ENCODE measurements at regions of chr7 and their contacts with region 1.

Region 1: DNA sequence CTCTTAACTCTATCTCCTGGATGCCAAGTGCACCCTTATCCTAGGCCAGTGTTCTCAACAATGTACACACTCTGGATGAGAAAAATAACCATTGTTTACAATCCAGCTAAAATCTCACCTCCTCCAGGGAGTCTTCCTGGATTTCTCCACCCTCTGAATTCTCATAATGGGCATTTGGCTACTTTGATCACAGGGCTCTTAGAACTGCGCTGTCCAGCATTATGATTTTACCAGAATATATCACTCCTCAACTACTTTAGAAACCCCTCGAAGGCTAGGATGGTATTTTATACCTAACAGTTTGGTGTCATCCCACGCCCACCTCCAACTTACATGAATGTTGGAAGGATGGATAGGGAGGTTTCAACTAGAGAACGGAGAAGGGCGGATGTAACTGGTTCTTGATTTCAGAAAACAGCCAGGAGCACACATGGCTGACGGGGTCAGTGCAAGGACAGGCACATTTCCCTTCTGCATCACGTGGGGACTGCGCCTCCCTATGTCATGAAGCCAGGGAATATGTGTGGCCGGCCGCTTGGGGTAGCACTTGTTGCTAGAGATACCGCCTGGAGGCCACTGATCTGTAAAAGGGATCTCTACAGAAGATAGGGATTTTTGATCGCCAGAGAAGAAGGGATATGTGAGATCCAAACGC is 1.2 kb upstream of the ATP6V0E2 start:
- DNase-seq: peak; percentile 48
- ATAC-seq: no peak
- H3K4me3 Mint-ChIP-seq: peak overlapping the region; percentile 85
- H3K27ac Mint-ChIP-seq: peak overlapping the region; percentile 84
- H3K4me1 Mint-ChIP-seq: peaks cover 74% of the 10 kb centered on the region
- H3K27me3 Mint-ChIP-seq: no peaks in the 10 kb centered on the region

Region 2: DNA sequence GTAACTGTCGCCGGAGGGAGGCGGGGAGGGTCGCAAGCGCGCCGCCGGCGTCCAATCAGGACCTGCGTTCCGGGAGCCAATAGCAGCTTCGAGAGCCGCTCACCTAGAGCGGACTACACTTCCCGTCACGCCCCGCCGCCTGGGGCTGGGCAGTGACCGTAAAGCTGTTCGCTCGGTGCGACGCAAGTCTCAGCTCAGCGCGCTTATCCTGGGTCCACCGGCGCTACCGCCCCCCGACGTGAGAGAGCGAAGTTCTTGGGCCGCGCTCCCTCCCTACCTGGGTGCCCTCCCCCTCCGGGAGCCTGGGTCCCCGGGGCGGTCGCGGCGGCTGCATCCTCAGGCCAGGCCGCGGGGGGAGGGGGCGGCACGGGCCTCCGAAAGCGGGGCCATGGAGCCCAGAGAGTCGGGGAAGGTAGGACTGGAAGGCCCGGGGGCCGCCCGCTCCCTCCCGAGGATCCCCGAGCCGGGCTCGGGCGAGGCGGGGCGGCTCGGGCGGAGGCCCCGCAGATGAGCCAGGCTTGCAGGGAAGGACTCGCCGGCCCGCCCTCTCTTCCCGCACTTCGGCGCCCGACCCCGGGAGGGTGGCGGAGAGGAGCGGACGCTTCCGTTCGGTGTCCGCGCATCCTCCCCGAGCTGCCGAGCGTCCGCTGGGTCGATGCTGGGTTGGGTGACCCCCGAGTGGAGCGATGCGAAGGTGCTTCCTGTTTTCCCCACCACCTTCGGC is 34.2 kb before region 1 on chr7 and contains the start of gene ZNF862:
- CTCF ChIA-PET with region 1: interaction called, 14 read pairs
- DNase-seq: peak; percentile 98
- ATAC-seq: peak; percentile 98
- H3K4me3 Mint-ChIP-seq: peak within 1 kb of the TSS; percentile 85
- H3K27ac Mint-ChIP-seq: peak within 1 kb of the TSS; percentile 75
- H3K4me1 Mint-ChIP-seq: peaks cover 19% of the 10 kb centered on the region
- H3K27me3 Mint-ChIP-seq: peaks cover 14% of the 10 kb centered on the region
- total RNA-seq, gene ZNF862: 23.1 to 24.8 TPM

Region 3: DNA sequence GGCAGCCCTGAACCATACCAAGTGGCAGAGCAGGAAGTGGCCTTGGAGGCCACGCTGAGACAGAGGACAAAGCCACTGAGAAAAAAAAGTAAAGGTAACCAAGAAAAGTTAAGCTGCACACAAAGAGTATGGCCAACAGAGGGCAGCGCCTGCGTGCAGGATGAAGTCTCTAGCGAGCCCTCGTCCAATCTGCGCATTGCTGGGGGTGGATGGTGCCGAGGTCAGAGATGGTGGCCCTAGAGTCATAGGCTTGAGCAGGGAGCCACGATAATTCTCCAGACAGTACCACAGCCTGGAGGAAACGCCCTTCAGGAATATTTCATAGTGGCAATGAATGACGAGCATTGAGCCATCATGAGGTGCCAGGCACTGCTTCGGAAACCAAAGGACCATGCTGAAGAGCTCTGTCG is 10.9 kb after region 1 on chr7:
- CTCF ChIA-PET with region 1: interaction called, 17 read pairs
- DNase-seq: peak; percentile 82
- ATAC-seq: peak; percentile 82
- H3K4me3 Mint-ChIP-seq: no peak overlapping the region
- H3K27ac Mint-ChIP-seq: peak overlapping the region; percentile 44
- H3K4me1 Mint-ChIP-seq: peaks cover 12% of the 10 kb centered on the region
- H3K27me3 Mint-ChIP-seq: no peaks in the 10 kb centered on the region